Vagina (tissue), 2 donors: ENCODE measurements at regions of chr1 and their contacts with region 1.

Region 1: GRCh38 chr1:63316984-63317816 is 5.2 kb upstream of the FOXD3 start:
- DNase-seq: no peak
- H3K4me3 ChIP-seq: peak overlapping the region; percentile 37 to 40
- H3K27ac ChIP-seq: no peak overlapping the region
- H3K4me1 ChIP-seq: peaks cover 27% of the 10 kb centered on the region
- H3K27me3 ChIP-seq: peaks cover 42% of the 10 kb centered on the region
- CTCF ChIP-seq: peak in 1 of 3 experiments; percentile 19
- POLR2A ChIP-seq: no peak

Region 2: DNA sequence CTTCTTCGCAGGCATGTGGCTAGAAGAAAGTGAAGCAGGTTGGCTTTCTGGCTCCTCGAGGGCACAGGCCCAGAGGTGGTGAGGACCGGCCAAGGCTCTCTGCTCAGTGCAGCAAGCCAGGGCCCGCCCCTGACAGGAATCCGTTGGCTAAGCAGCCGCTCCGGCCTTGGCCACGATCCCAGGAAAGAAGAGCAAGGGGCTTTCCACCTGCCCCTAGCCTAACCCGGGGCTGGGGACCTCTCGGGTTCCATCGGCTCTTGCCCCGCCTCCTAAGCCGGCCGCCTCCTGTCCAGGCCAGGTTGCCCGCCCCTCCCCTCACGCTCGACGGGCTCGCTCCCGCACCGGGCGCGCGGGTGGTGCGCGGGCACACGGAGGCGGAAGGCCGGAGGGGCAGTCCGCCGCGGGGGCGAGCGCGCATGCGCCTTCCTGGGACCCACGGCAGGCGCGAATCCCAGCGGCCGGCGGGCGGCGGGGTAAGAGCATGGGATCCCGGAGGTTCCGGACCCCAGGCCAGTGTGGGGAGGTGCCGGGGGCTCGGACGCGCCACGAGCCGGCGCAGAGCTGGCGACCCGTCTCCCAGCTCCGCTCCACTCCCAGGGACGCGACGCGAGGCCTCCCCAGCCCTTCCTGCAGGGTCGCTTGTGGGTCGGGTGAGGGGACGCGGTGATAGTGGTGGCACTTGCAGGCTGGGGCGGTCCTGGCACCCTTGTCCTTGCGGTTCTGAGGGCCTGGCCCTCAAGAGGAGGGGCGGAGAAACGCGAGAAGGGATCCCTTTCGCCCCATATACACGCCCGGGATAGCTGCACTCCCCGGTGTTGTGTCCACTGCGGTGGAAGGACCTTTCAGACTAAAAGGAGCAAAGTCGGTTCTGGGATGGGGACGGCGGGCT is 50.3 kb after region 1 on chr1 and contains the start of gene ALG6:
- intact Hi-C with region 1: loop called (anchors 2 kb)
- DNase-seq: peak in 1 of 2 donors; percentile 88
- H3K4me3 ChIP-seq: peak within 1 kb of the TSS; percentile 70 to 91
- H3K27ac ChIP-seq: peak within 1 kb of the TSS; percentile 66
- H3K4me1 ChIP-seq: peaks cover 17% of the 10 kb centered on the region
- H3K27me3 ChIP-seq: no peaks in the 10 kb centered on the region
- CTCF ChIP-seq: no peak
- POLR2A ChIP-seq: peak in 1 of 2 donors; percentile 59
- total RNA-seq, gene ALG6: 13.0 TPM